Mammary epithelial cell (primary cell): ENCODE measurements at regions of chr11 and their contacts with region 1.

Region 1: DNA sequence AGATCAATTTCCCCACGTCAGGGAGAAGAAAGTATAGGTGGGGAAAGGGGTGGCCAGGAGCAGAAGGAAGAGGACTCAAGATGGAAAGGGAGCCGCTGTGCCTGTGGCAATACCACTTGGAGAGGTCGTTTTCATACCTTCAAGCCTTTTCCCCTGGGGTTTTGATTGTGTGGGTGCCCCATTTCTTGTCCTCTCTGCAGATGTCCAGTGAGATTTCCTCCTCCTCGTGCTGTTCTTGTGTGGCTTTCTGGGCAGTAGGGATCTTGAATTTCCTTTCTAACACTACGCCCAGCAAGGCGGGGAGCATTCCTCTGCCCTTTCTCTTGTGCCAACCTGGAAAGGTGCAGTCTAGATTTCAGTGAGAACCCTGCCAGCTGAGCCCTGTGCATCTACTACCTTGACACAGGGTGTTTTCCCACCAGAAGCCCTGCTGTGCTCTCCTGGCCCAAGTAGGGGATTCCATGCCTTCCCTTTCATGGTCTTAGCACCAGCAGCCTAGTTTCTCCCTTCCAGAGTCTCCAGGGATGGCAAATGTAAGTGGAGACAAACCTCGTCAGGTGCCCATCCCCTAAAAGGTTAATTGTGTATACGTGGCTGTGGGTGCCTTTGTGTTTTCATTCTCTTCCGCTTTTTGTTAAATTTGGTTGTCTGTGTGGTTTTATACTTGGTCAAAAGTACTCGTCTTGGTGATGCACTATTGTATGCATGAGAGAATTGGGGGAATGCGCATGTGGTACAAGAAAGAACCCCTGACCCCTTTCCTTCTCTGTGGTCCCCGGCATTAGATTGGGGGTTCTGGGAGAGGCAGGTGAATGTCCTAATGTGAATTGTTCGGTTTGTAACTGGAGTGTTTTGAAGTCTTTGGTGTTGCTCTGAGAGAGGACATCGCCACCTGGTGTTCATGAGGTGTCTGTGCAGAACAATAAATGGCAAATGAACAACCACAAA is 71.4 kb upstream of the MPEG1 start:
- DNase-seq: peak; percentile 31
- H3K4me3 ChIP-seq: no peak overlapping the region
- H3K27ac ChIP-seq: no peak overlapping the region
- H3K4me1 ChIP-seq: no peaks in the 10 kb centered on the region
- H3K27me3 ChIP-seq: no peaks in the 10 kb centered on the region
- CTCF ChIP-seq: peak; percentile 59 to 80

Region 2: GRCh38 chr11:59186130-59186594 is 97.9 kb before region 1 on chr11:
- CTCF ChIA-PET with region 1: no interaction called
- dilution Hi-C with region 1: no loop called
- in situ Hi-C with region 1: loop called in 1 of 2 experiments (anchors 25 kb)
- intact Hi-C with region 1: no loop called
- DNase-seq: peak; percentile 11
- H3K4me3 ChIP-seq: no peak overlapping the region
- H3K27ac ChIP-seq: no peak overlapping the region
- H3K4me1 ChIP-seq: no peaks in the 10 kb centered on the region
- H3K27me3 ChIP-seq: no peaks in the 10 kb centered on the region
- CTCF ChIP-seq: peak; percentile 62 to 88

Region 3: DNA sequence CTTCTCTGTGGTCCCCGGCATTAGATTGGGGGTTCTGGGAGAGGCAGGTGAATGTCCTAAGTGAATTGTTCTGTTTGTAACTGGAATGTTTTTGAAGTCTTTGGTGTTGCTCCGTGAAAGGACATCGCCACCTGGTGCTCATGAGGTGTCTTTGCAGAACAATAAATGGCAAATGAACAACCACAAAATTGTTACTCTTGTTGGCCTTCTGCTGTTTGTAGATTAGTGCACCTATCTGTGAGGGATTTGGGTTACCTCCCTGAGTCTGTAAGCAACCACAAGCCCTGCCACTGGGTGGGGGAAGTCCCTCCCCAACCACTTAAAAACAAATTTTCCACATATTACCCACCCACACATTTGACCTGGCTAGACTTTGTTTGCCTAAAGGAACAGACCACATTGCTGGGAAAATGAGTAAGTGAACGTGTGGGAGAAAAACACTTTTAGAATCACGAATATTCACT is 76.1 kb before region 1 on chr11:
- CTCF ChIA-PET with region 1: no interaction called
- dilution Hi-C with region 1: no loop called
- in situ Hi-C with region 1: no loop called
- intact Hi-C with region 1: loop called (anchors 1 kb)
- DNase-seq: peak; percentile 74
- H3K4me3 ChIP-seq: no peak overlapping the region
- H3K27ac ChIP-seq: no peak overlapping the region
- H3K4me1 ChIP-seq: peaks cover 7% of the 10 kb centered on the region
- H3K27me3 ChIP-seq: no peaks in the 10 kb centered on the region
- CTCF ChIP-seq: peak; percentile 64 to 76

Region 4: GRCh38 chr11:59263225-59263894 is 20.7 kb before region 1 on chr11:
- CTCF ChIA-PET with region 1: interaction called, 14 read pairs
- dilution Hi-C with region 1: no loop called
- in situ Hi-C with region 1: no loop called
- intact Hi-C with region 1: loop called (anchors 1 kb)
- DNase-seq: peak; percentile 16
- H3K4me3 ChIP-seq: no peak overlapping the region
- H3K27ac ChIP-seq: no peak overlapping the region
- H3K4me1 ChIP-seq: peaks cover 35% of the 10 kb centered on the region
- H3K27me3 ChIP-seq: no peaks in the 10 kb centered on the region
- CTCF ChIP-seq: peak; percentile 46 to 75

Region 5: GRCh38 chr11:59295435-59295834 is 11.3 kb after region 1 on chr11:
- CTCF ChIA-PET with region 1: no interaction called
- dilution Hi-C with region 1: no loop called
- in situ Hi-C with region 1: no loop called
- intact Hi-C with region 1: no loop called
- DNase-seq: no peak
- H3K4me3 ChIP-seq: no peak overlapping the region
- H3K27ac ChIP-seq: no peak overlapping the region
- H3K4me1 ChIP-seq: no peaks in the 10 kb centered on the region
- H3K27me3 ChIP-seq: peaks cover 5% of the 10 kb centered on the region
- CTCF ChIP-seq: no peak